ENCODE measurements at regions of chr5 and their contacts with region 1.

Region 1: GRCh38 chr5:177520916-177521910 is 4.5 kb upstream of the DDX41 start:
- DNase-seq: no peak
- H3K4me3 ChIP-seq: no peak overlapping the region
- H3K27ac ChIP-seq: no peak overlapping the region
- H3K4me1 ChIP-seq: peaks cover under 1 to 2% of the 10 kb centered on the region in 2 donors
- H3K27me3 ChIP-seq: no peaks in the 10 kb centered on the region
- CTCF ChIP-seq: no peak
- POLR2A ChIP-seq: no peak

Region 2: GRCh38 chr5:177592010-177592834 is 71.0 kb after region 1 on chr5 and contains the start of gene TMED9:
- intact Hi-C with region 1: loop called (anchors 10 kb)
- DNase-seq: peak; percentile 83 to 88
- H3K4me3 ChIP-seq: peak within 1 kb of the TSS; percentile 94 to 99 (median 97)
- H3K27ac ChIP-seq: peak within 1 kb of the TSS in 2 of 3 donors; percentile 38 to 47
- H3K4me1 ChIP-seq: peaks cover 10% of the 10 kb centered on the region in 2 donors
- H3K27me3 ChIP-seq: no peaks in the 10 kb centered on the region
- CTCF ChIP-seq: peak in 1 of 6 experiments; percentile 29
- POLR2A ChIP-seq: peak in 1 of 2 donors; percentile 94
- total RNA-seq, gene TMED9: 86.9 to 162 (median 115) TPM